Colonic mucosa (tissue), 4 donors: ENCODE measurements at regions of chr7 and their contacts with region 1.

Region 1: GRCh38 chr7:1503816-1504775 is at the start of gene INTS1:
- DNase-seq: peak; percentile 94
- H3K4me3 ChIP-seq: peak within 1 kb of the TSS; percentile 98
- H3K27ac ChIP-seq: peak within 1 kb of the TSS; percentile 51
- H3K4me1 ChIP-seq: peaks cover 8% of the 10 kb centered on the region
- H3K27me3 ChIP-seq: no peaks in the 10 kb centered on the region
- CTCF ChIP-seq: peak; percentile 85
- total RNA-seq, gene INTS1: 61.0 to 141 TPM

Region 2: DNA sequence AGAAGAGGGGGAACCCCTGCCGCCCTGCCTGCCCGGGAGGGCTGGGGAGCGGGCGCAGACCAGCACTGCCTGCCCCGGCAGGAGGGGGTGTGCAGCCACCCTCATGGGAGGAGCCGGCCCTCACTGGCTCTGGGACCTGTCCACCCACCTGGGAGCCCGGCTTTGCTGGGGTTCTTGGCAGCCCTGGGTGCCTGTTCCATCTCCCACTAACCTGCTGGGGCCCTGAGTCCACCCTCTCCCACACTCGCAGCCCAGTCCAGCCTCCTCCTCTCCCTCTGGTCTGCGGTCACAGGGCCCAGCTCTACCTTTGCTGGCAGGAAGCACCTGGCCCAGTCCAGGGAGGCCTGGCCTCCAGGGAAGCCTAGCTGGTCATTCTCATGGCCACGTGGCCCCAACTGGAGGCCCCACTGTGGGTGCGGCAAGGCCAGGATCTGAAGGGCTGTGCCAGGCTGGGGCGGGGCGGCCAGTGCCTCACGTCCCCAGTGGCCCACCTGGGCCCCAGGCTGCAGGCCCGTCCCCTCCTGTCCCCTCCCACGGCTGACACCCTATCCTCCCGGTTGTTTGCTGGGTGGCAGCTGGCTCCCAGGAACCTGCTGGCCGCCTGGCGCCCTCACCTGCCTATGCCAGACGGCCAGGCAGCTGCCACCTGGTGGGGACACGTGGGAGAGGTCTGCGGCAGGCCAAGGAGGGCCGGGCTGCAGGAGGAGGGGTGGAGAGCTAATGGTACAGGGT is 51.9 kb after region 1 on chr7 and contains the start of gene TMEM184A:
- intact Hi-C with region 1: loop called (anchors 5 kb)
- DNase-seq: peak; percentile 92
- H3K4me3 ChIP-seq: peak within 1 kb of the TSS; percentile 39
- H3K27ac ChIP-seq: peak within 1 kb of the TSS; percentile 89
- H3K4me1 ChIP-seq: peaks cover 8% of the 10 kb centered on the region
- H3K27me3 ChIP-seq: no peaks in the 10 kb centered on the region
- CTCF ChIP-seq: peak; percentile 57
- total RNA-seq, gene TMEM184A: 35.8 to 54.3 TPM